Activated B cell treated with CpG ODN at 0.5 μM for 24 hours (primary cell): ENCODE measurements at regions of chr6 and their contacts with region 1.

Region 1: GRCh38 chr6:127737009-127737486 is 160.1 kb downstream of the C6orf58 start:
- DNase-seq: no peak
- ATAC-seq: no peak
- H3K4me3 Mint-ChIP-seq: no peak overlapping the region
- H3K27ac Mint-ChIP-seq: no peak overlapping the region
- H3K4me1 Mint-ChIP-seq: peaks cover 1% of the 10 kb centered on the region
- H3K27me3 Mint-ChIP-seq: no peaks in the 10 kb centered on the region
- CTCF ChIP-seq: no peak

Region 2: GRCh38 chr6:128519132-128519930 is 782.3 kb after region 1 on chr6:
- CTCF ChIA-PET with region 1: no interaction called
- POLR2A ChIA-PET with region 1: no interaction called
- intact Hi-C with region 1: loop called (anchors 5 kb)
- DNase-seq: no peak
- ATAC-seq: peak; percentile 38
- H3K4me3 Mint-ChIP-seq: peak overlapping the region; percentile 84
- H3K27ac Mint-ChIP-seq: no peak overlapping the region
- H3K4me1 Mint-ChIP-seq: peaks cover 21% of the 10 kb centered on the region
- H3K27me3 Mint-ChIP-seq: peaks cover 47% of the 10 kb centered on the region
- CTCF ChIP-seq: no peak